ENCODE measurements at regions of chr6 and their contacts with region 1.

Region 1: DNA sequence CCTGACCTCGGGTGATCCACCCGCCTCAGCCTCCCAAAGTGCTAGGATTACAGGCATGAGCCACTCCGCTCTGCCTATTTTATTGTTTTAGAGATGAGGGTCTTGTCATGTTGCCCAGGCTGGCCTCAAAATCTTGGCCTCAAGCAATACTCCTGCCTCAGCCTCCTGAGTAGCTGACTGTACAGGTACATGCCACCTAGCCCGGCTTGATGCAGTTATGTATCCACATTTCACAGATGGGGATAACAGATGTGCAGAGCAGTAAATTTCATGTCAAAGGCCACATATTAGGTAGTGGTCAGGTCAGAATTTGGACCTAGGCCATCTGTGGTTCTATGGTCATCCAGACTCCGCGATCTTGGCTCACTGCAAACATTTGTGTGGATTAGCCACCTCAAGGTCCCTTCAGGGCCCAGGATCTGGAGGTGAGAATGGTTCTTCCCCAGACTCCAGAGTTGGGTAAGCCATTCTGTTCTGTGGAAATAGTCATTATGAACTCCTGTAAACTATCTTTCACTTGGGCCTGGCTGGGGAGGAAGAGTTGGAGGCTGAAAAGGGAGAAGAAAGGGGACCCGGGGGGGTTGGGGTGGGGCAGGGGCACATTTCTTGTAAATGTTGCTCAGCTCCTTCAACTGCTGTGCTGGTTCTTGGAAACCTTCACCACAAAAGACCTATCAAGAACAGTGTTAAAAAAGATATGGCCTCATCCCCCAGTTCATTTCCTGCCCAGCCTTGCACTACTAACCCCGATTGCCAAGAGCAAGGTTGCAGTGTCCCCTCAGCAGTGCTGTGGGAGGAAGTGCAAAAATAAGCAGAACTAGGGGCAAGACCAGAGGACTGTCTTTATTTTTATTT is 13.0 kb downstream of the PIM1 start:
- DNase-seq: no peak
- H3K4me3 ChIP-seq: no peak overlapping the region
- H3K27ac ChIP-seq: peak overlapping the region in 1 of 2 donors; percentile 35
- H3K4me1 ChIP-seq: no peaks in the 10 kb centered on the region
- H3K27me3 ChIP-seq: no peaks in the 10 kb centered on the region
- CTCF ChIP-seq: no peak
- POLR2A ChIP-seq: no peak

Region 2: DNA sequence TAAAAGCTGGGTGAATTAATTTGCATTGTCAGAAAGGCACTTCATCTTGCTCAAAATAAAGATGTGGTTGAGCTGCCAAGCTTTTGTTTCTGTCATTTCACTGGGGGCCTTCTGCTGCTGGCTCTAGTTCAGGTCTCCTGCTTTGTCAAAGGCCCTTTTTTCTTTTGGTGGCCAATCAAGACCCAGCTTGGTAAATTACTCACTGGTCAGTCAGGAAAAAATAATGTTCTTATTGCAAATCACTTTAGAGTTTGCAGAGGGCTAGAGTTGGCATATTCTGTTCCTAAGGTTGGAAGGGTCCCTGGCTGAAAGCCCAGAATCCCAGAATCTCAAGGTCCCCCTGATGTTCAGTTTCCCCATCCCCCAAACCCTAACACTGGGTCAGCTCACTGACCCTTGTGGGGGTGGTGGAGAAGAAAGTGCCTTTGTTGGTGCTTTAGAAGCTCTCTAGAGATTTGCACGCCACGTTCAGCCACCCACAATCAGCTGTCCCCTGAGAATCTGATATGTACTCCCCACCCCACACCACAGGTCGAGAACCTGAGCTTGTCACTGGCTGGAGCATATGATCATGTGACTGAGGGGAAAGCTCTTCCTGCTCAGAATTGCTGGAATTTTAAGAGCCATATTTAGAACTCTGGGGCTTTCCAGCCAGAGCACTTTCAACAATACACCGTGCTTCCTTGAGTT is 824.6 kb before region 1 on chr6:
- intact Hi-C with region 1: loop called (anchors 5 kb)
- DNase-seq: no peak
- H3K4me3 ChIP-seq: no peak overlapping the region
- H3K27ac ChIP-seq: no peak overlapping the region
- H3K4me1 ChIP-seq: no peaks in the 10 kb centered on the region
- H3K27me3 ChIP-seq: no peaks in the 10 kb centered on the region
- CTCF ChIP-seq: no peak
- POLR2A ChIP-seq: no peak

Region 3: GRCh38 chr6:37134606-37135191 is 48.3 kb before region 1 on chr6:
- intact Hi-C with region 1: no loop called
- DNase-seq: peak in 1 of 2 donors; percentile 32
- H3K4me3 ChIP-seq: no peak overlapping the region
- H3K27ac ChIP-seq: peak overlapping the region; percentile 4 to 48
- H3K4me1 ChIP-seq: peaks cover 0 to 6% of the 10 kb centered on the region in 2 donors
- H3K27me3 ChIP-seq: no peaks in the 10 kb centered on the region
- CTCF ChIP-seq: no peak
- POLR2A ChIP-seq: no peak

Region 4: GRCh38 chr6:38617856-38618255 is 1434.9 kb after region 1 on chr6:
- intact Hi-C with region 1: no loop called
- DNase-seq: no peak
- H3K4me3 ChIP-seq: no peak overlapping the region
- H3K27ac ChIP-seq: no peak overlapping the region
- H3K4me1 ChIP-seq: no peaks in the 10 kb centered on the region
- H3K27me3 ChIP-seq: no peaks in the 10 kb centered on the region
- CTCF ChIP-seq: no peak
- POLR2A ChIP-seq: no peak